Aorta (tissue), 5 donors: ENCODE measurements at regions of chr1 and their contacts with region 1.

Region 1: GRCh38 chr1:40305457-40305856 is 11.6 kb downstream of the COL9A2 start:
- DNase-seq: no peak
- ATAC-seq: no peak
- H3K4me3 ChIP-seq: no peak overlapping the region
- H3K27ac ChIP-seq: no peak overlapping the region
- H3K4me1 ChIP-seq: no peaks in the 10 kb centered on the region
- H3K27me3 ChIP-seq: no peaks in the 10 kb centered on the region

Region 2: GRCh38 chr1:40143891-40144575 is 161.4 kb before region 1 on chr1:
- intact Hi-C with region 1: no loop called
- DNase-seq: peak in 1 of 2 donors; percentile 46
- ATAC-seq: peak; percentile 74
- H3K4me3 ChIP-seq: no peak overlapping the region
- H3K27ac ChIP-seq: no peak overlapping the region
- H3K4me1 ChIP-seq: no peaks in the 10 kb centered on the region
- H3K27me3 ChIP-seq: no peaks in the 10 kb centered on the region

Region 3: DNA sequence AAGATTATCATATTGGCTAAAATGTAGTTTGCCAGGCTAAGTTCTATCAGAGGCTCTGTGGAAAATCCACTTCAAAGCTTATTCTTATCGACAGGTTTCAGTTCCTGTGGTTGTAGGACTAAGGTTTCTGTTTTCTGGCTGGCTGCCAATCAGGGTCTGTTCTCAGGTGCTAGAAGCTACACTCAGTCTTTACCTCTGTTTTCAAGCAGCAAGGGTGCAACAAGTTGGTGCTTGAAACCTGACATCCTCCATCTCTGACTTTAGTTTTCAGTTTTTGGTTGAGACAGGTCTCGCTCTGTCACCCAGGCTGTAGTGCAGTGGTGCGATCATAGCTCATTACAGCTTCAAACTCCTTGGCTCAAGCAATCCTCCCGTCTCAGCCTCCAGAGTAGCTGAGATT is 73.0 kb before region 1 on chr1:
- intact Hi-C with region 1: no loop called
- DNase-seq: no peak
- ATAC-seq: no peak
- H3K4me3 ChIP-seq: no peak overlapping the region
- H3K27ac ChIP-seq: peak overlapping the region in 1 of 2 donors; percentile 36
- H3K4me1 ChIP-seq: no peaks in the 10 kb centered on the region
- H3K27me3 ChIP-seq: no peaks in the 10 kb centered on the region

Region 4: GRCh38 chr1:40270152-40270834 is 35.2 kb before region 1 on chr1:
- intact Hi-C with region 1: loop called in 1 of 2 experiments (anchors 5 kb)
- DNase-seq: no peak
- ATAC-seq: no peak
- H3K4me3 ChIP-seq: no peak overlapping the region
- H3K27ac ChIP-seq: no peak overlapping the region
- H3K4me1 ChIP-seq: peaks cover 0 to 7% of the 10 kb centered on the region in 2 donors
- H3K27me3 ChIP-seq: no peaks in the 10 kb centered on the region